Dorsolateral prefrontal cortex (tissue), 120 donors: ENCODE measurements at regions of chrX and their contacts with region 1.

Region 1: GRCh38 chrX:64205735-64206491 is 405 bp upstream of the AMER1 start:
- DNase-seq: peak; percentile 82 to 97 (median 94)
- H3K4me3 ChIP-seq: peak overlapping the region; percentile 52 to 81 (median 70)
- H3K27ac ChIP-seq: peak overlapping the region; percentile 42 to 96 (median 85)
- H3K27me3 ChIP-seq: peaks cover 0 to 90% (median 10%) of the 10 kb centered on the region in 45 donors
- CTCF ChIP-seq: peak in 32 of 56 donors; percentile 6 to 40 (median 22)

Region 2: DNA sequence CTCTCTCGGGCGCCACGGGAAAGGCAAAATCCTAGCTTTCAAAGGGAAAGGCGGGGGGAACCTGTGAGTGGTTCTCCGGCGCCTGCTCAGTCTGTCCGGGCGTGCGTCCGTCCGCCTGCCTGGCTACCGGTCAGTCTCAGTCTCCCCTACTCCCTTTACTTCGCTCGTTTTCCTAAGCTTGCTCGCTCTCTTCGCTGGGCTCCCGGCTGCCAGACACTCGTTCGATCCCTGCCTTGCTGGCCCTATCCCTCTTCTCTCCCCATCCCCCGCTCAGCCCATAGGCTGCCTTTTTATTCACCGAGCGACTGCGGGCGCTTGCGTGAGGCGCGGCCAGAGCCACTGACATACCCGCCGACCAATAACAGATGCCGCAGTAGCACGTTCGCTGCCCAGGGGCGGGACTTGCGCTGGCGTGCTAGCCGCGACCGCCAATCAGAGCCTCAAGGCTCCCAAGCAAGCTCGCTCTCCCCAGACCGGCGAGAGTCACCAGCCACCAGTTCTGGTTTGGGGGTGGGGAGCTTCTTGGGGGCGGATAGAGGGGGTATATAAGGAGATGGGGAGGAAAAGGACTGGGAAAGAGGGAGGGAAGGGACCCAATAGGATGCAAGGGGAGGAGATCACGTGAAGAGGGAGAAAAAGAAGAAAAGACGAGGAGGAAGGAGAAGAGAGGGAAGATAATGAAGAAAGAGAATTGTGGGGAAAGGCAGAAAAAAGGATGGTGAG is 450.9 kb before region 1 on chrX:
- intact Hi-C with region 1: loop called in 1 of 2 experiments (anchors 10 kb)
- DNase-seq: peak; percentile 81 to 95 (median 94)
- H3K4me3 ChIP-seq: peak overlapping the region; percentile 36 to 84 (median 65)
- H3K27ac ChIP-seq: peak overlapping the region; percentile 49 to 95 (median 89)
- H3K27me3 ChIP-seq: peaks cover 0 to 63% (median 4%) of the 10 kb centered on the region in 45 donors
- CTCF ChIP-seq: peak in 2 of 56 donors; percentile 14 to 16

Region 3: DNA sequence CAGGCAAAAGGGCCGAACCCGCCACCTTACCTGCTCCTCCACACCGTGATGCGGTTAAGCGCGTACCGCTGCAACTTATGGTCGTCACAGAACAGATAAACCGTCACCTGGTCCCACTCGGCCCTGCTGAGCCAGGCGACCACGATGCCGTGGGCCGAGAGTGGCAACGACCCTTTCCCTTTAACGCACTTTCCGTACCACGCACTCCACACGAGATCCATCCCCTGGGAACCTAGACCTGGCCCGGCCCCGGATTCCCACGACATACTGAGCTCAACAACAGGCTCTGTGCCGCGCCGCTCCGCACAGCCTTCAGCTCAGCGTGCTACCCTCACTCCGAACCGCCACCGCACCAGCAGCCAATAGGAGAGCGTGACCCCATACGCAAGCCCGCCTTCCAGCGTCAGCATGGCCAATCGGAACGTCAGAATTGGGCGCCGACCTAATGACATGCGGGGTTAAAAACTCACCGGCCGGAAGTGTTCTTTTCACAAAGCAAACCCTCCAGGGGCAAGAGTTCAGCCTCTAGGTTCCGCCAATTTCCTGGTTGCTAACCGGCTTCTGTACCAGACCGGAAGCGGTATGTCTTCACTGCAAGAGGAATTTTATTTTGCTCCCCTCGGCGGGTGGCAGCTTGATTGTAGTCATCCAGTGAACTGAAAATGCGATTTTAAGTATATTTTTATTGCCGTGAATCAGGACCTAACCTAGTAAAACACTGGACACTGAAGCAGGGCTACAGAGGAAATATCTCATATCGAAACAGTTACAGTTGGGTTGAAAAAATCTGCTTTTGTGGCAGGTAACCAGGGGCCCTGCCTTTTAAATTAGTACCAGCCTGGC is 1328.8 kb after region 1 on chrX and contains the start of gene LAS1L:
- intact Hi-C with region 1: loop called in 1 of 2 experiments (anchors 10 kb)
- DNase-seq: peak; percentile 84 to 94 (median 92)
- H3K4me3 ChIP-seq: peak within 1 kb of the TSS; percentile 36 to 86 (median 74)
- H3K27ac ChIP-seq: peak within 1 kb of the TSS in 42 of 59 donors; percentile 2 to 84 (median 66)
- H3K27me3 ChIP-seq: peaks cover 0 to 60% (median 6%) of the 10 kb centered on the region in 45 donors
- CTCF ChIP-seq: peak in 15 of 56 donors; percentile 10 to 39 (median 23)
- total RNA-seq, gene LAS1L: 31.2 to 76.2 (median 51.0) TPM